ENCODE measurements at regions of chr9 and their contacts with region 1.

Region 1: DNA sequence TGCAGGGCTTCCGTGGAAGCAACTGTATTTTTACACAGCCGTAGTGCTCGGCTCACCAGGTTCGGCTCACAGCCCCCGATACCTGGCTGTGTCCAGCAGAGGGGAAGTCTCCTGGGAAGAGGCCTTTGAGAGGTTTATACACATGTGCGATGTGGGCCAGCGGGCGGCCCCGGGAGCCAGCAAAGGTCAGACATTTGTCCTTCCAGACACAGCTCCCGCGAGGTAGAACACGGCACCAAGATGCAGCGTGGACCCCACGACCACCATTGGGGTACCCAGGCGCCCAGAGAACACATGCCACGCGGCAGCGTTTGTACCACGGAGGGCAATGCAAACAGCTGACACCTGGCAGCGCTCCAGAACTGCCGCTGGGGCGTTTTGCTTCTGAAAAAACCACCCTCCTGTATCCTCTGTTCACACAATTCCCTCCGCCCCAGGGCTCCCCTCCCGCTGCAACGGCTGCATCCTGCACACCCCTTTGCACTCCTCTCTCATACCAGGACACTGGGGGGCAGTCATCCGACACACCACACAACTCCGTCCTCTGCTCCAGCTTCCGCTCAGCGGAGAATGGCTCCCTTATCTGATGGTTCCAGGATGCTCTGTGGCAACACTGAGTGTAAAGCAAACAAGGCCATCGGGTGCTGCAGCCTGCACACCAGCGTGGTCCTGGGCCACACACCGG is 235.3 kb downstream of the SYK start:
- DNase-seq: peak; percentile 64 to 97 (median 82)

Region 2: GRCh38 chr9:91681461-91682305 is 644.7 kb after region 1 on chr9:
- intact Hi-C with region 1: loop called (anchors 2 kb)
- DNase-seq: peak; percentile 69 to 98 (median 84)

Measured in posterior cingulate gyrus (tissue), 11 donors.